ENCODE measurements at regions of chr2 and their contacts with region 1.

Region 1: DNA sequence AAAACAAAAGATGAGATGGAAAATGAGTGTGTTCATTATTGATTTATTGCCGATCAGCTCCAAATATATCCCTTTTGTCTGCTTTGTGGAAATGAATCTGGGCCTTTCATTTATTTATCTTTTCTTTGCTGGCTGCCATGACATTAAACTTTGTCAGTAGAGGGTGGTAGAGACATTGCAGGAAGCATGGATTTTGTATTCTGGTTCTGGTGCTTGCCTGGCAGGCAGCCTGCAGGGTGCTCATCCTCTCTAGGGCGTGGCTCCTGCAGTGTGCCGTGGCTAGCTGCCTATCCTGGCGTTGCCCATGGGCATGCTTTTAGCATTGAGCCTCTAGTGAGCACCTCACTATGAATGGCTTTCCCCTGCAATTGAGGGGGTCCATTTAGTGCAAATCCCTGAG is 593.1 kb downstream of the RNF144A start:
- H3K4me3 Mint-ChIP-seq: no peak overlapping the region
- H3K27ac Mint-ChIP-seq: no peak overlapping the region
- H3K4me1 Mint-ChIP-seq: no peaks in the 10 kb centered on the region
- H3K27me3 Mint-ChIP-seq: no peaks in the 10 kb centered on the region

Region 2: DNA sequence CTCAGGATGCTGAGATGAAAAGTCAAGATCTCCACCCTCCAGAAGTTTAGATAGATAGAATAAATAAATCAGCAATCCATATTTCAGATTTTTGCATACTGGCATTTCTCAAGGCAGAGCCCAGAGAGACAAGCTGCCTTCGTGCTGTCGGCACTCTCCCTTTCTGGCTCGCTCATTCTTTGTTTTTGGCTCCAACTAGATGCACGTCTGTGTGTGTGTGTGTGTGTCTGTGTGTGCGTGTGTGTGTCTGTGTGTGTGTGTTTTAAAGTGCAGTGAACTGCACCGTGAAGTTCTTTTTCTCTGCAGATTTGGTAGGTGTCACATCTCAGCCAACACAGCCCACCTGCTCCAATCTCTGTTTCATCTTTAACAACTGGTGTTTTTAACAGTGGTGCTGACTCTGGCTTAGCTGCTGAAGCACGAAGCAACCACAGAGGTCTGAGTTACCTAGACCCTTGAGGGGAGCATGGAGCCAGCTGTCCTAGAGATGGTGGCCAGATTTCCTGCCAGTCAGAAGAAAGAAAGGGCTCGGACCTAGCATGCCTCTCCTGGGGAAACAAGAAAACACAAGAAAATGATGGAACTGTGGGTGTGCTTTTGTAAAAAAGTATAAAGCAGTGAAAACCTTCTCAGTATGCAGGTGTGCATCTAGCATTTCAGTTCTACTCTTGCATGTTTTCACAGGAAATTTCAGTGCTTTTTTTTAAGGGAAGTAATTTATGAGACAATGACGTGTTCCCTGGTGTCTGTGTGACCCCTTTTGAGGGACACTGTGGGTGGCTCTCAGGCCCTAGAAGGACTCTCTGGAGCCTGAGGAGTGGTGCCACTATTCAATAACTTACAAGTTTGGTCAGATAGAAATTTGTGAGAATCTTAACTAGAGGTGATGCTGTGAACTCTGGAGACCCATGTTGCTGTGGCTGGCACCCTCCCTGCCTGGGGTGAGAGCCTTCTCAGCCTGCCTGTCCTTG is 228.8 kb before region 1 on chr2:
- intact Hi-C with region 1: no loop called
- H3K4me3 Mint-ChIP-seq: no peak overlapping the region
- H3K27ac Mint-ChIP-seq: no peak overlapping the region
- H3K4me1 Mint-ChIP-seq: no peaks in the 10 kb centered on the region
- H3K27me3 Mint-ChIP-seq: peaks cover 3% of the 10 kb centered on the region

Region 3: GRCh38 chr2:7530001-7530400 is 19.7 kb after region 1 on chr2:
- intact Hi-C with region 1: loop called (anchors 1 kb)
- H3K4me3 Mint-ChIP-seq: no peak overlapping the region
- H3K27ac Mint-ChIP-seq: no peak overlapping the region
- H3K4me1 Mint-ChIP-seq: no peaks in the 10 kb centered on the region
- H3K27me3 Mint-ChIP-seq: no peaks in the 10 kb centered on the region

Measured in dendritic cell treated with granulocyte-macrophage colony-stimulating factor and Interleukin-4, amounts not matched to agents 40 ng/mL and 50 ng/mL, for 4 days (primary cell).